Cardiac septum (tissue), 1 donor: ENCODE measurements at regions of chr9 and their contacts with region 1.

Region 1: DNA sequence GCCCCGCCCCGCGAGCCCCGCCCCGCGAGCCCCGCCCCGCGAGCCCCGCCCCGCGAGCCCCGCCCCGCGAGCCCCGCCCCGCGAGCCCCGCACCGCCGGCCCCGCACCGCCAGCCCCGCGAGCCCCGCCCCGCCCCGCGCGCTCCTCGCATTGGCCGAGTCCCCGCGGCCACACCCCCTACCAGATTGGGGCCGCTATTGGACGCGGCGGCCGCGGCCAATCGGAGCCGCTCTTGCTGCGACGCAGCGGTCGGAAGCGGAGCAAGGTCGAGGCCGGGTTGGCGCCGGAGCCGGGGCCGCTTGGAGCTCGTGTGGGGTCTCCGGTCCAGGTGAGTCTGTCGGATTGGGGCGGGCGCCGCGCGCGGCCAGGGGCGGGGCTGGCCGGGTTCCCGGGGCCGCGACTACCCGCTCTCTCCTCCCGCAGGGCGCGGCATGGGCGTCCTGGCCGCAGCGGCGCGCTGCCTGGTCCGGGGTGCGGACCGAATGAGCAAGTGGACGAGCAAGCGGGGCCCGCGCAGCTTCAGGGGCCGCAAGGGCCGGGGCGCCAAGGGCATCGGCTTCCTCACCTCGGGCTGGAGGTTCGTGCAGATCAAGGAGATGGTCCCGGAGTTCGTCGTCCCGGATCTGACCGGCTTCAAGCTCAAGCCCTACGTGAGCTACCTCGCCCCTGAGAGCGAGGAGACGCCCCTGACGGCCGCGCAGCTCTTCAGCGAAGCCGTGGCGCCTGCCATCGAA is at the start of gene MRPL41:
- DNase-seq: peak; percentile 95
- total RNA-seq, gene MRPL41: 184 TPM

Region 2: GRCh38 chr9:137368431-137369035 is 183.3 kb before region 1 on chr9:
- intact Hi-C with region 1: no loop called
- DNase-seq: peak; percentile 81

Region 3: DNA sequence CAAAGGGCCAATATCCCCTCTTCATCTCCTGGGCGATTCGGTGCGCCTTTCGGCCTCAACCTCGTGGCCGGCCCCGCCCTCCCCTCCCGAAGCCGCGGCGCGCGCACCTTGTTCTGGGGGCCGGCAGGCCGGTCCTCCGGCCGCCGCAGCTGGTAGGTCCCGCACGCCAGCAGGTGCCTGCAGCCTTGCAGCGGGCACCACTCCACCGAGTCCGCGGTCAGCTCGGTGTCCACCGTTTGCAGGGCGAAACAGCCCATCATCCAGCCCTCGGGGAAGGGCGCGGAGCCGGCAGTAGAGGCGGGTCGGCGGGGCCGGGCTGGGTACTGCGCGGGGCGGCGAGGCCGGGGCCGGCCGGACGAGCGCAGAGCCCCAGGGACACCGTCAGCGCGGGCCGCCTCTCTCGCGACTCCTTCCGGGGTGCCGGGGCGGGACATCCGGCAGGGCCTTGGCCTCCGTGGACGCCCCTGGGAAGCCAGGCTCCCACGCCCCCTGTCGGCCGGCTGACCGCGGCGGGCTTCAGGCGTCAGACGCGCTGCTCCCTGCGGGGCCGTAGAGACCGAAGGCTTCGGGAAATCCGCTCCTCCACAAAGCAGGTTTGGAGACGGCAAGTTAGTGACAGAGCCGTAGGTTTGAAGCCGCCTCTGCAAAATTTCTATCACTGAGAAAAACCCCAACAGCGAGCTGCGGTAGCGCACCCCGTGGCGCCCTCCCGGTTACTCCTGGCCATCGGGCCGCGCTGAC is 26.9 kb after region 1 on chr9 and contains the start of gene DPH7:
- intact Hi-C with region 1: loop called (anchors 2 kb)
- DNase-seq: peak; percentile 98
- total RNA-seq, gene DPH7: 21.2 TPM